HCT116 (cell line): ENCODE measurements at regions of chr9 and their contacts with region 1.

Region 1: GRCh38 chr9:71628247-71628646 is 140.1 kb downstream of the CEMIP2 start:
- DNase-seq: no peak
- ATAC-seq: peak; percentile 83
- H3K4me3 ChIP-seq: no peak overlapping the region
- H3K27ac ChIP-seq: no peak overlapping the region
- H3K4me1 ChIP-seq: no peaks in the 10 kb centered on the region
- H3K27me3 ChIP-seq: no peaks in the 10 kb centered on the region
- CTCF ChIP-seq: peak; percentile 58 to 71 (median 66); a peak in 5 of 6 replicates
- POLR2A ChIP-seq: no peak
- RAD21 ChIP-seq: peak; percentile 68

Region 2: GRCh38 chr9:71716138-71716909 is 88.1 kb after region 1 on chr9:
- CTCF ChIA-PET with region 1: no interaction called
- POLR2A ChIA-PET with region 1: no interaction called
- RAD21 ChIA-PET with region 1: no interaction called
- intact Hi-C with region 1: loop called (anchors 10 kb)
- DNase-seq: no peak
- ATAC-seq: no peak
- H3K4me3 ChIP-seq: no peak overlapping the region
- H3K27ac ChIP-seq: no peak overlapping the region
- H3K4me1 ChIP-seq: no peaks in the 10 kb centered on the region
- H3K27me3 ChIP-seq: no peaks in the 10 kb centered on the region
- CTCF ChIP-seq: peak; percentile 30 to 62 (median 38); a peak in 4 of 6 replicates
- POLR2A ChIP-seq: no peak
- RAD21 ChIP-seq: no peak; the same call in 1 of the 2 replicates

Region 3: DNA sequence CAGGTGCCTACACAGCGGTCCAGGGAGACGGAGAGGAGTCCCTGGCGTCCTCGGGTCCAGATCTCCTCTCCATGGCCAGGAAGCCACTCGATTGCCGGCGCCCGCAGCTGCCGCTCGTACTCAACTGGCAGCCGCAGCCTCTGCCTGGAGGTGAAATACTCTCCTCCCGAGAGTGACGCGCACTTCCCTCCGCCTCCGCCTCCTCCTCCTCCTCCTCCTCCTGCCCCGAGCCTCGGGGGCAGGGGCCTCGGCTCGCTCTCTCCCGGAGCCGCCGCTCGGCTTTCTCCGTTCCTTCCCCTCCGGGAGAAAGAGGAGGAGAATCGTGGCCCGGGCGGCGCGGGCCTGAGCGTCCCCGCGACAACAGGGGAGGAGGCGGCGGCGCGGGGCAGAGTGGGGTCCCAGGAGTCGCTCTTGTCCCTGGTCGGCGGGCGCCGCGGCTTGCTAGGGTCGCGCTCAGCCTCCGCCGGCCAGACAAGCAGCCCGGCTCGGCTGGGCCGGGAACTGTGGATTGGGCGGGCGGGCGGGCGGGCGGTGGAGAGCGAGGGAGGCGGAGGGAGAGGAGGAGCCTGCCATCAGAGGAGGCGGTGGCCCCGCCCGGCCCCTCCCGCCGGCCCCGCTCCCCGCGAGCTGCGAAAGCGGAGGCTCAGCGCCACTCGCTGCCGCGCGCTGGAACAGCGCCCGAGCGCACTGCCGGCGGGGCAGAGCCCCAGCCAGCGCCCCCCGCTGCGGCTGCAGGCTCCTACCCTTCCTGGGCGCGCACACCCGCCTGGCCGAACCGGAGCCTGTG is 140.3 kb after region 1 on chr9 and contains the start of gene CEMIP2:
- CTCF ChIA-PET with region 1: interaction called, 7 read pairs
- POLR2A ChIA-PET with region 1: no interaction called
- RAD21 ChIA-PET with region 1: no interaction called
- intact Hi-C with region 1: loop called (anchors 2 kb)
- DNase-seq: peak; percentile 62
- ATAC-seq: peak; percentile 82
- H3K4me3 ChIP-seq: peak within 1 kb of the TSS; percentile 76 to 82
- H3K27ac ChIP-seq: peak within 1 kb of the TSS; percentile 79
- H3K4me1 ChIP-seq: peaks cover 21 to 46% of the 10 kb centered on the region in 2 experiments
- H3K27me3 ChIP-seq: no peaks in the 10 kb centered on the region
- CTCF ChIP-seq: peak in 2 of 3 experiments; percentile 29 to 43; a peak in 4 of 6 replicates
- POLR2A ChIP-seq: peak; percentile 42
- RAD21 ChIP-seq: peak; percentile 68
- total RNA-seq, gene CEMIP2: 14.3 TPM